Left lung (tissue), 14 donors: ENCODE measurements at regions of chr11 and their contacts with region 1.

Region 1: DNA sequence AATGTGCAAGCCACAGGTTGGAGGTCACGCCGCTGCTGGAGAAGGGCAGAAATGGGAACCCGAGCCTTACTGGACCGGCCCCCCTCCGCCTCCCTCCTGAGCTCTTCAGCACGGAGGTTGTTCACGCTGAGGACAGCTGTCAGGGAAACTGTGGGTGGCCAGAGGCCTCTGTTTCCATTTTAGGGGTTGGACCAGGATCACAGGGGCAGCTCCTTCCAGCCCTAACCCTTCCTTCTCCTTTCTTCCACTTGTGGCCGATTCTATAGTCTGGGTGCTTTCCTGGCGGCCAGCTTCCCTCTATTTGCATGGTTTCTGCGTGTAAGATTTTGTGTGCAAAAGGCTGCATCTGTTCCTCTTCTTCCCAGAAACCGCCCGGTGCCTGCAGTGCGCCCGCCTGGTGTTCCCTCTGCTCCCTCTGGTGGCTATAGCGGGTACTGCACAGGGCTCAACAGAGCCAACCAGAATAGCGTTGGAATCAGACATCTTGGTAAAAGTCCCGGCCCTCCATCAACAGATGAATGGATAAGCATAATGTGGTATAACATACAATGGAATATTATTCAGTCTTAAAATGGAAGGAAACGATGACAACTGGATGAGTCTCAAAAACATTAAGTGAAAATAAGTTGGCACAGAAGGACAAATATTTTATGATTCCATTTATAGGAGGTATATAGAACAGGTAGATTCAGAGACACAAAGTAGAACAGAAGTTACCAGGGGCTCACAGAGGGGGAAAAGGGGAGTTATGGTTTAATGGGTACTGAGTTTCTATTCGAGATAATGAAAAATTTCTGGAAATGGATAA is 8.4 kb upstream of the SLC22A8 start:
- DNase-seq: peak; percentile 71 to 92 (median 85)
- ATAC-seq: peak; percentile 99
- H3K4me3 ChIP-seq: no peak overlapping the region
- H3K27ac ChIP-seq: no peak overlapping the region
- H3K4me1 ChIP-seq: peaks cover 0 to 8% of the 10 kb centered on the region in 2 donors
- H3K27me3 ChIP-seq: peaks cover 0 to 9% of the 10 kb centered on the region in 2 donors
- CTCF ChIP-seq: peak; percentile 96 to 100

Region 2: DNA sequence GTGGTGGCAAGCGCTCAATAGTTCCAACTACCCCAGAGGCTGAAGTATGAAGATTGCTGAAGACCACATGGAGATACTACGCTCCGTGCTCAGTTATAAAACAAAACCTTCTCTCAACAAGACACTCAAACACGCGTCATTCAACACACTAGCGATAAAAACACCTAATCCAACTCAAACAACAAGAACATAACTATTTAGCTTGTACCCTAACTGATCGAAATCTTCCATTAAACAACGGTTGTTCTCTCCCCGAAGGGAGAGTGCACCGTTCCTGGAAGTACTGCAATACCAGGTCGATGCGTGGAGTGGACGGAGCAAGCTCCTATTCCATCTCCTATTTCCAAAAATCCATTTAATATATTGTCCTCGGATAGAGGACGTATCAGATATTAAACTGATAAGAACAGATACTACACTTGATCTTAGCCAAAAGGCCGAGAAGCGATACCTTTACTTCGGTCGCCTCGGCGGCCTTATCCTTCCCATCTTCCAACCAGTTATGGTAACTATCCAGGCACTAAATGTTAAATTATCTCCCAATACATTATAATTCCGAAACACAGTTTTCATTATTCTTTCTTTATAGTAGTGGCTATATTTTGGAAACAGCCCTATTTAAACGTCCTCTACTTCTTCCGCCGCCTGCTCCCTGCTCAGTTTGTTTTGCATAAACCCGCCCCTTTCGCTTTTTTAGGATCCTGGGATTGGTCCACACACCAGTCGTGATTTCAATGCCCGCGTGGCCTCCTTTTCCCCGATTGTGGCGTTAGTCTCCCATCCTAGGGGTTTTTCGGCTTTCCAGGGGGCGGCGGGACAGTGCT is 182.5 kb before region 1 on chr11:
- intact Hi-C with region 1: no loop called
- DNase-seq: peak; percentile 86 to 94 (median 91)
- ATAC-seq: peak; percentile 73
- H3K4me3 ChIP-seq: peak overlapping the region; percentile 68 to 98
- H3K27ac ChIP-seq: peak overlapping the region; percentile 98 to 99
- H3K4me1 ChIP-seq: peaks cover 10 to 33% of the 10 kb centered on the region in 2 donors
- H3K27me3 ChIP-seq: no peaks in the 10 kb centered on the region
- CTCF ChIP-seq: no peak

Region 3: GRCh38 chr11:62905927-62906531 is 118.0 kb before region 1 on chr11:
- intact Hi-C with region 1: loop called (anchors 2 to 10 kb)
- DNase-seq: peak; percentile 78 to 89 (median 83)
- ATAC-seq: peak; percentile 86
- H3K4me3 ChIP-seq: no peak overlapping the region
- H3K27ac ChIP-seq: peak overlapping the region in 1 of 2 donors; percentile 62
- H3K4me1 ChIP-seq: peaks cover 14 to 43% of the 10 kb centered on the region in 2 donors
- H3K27me3 ChIP-seq: no peaks in the 10 kb centered on the region
- CTCF ChIP-seq: peak; percentile 95 to 98

Region 4: GRCh38 chr11:63132985-63133775 is 109.1 kb after region 1 on chr11:
- intact Hi-C with region 1: no loop called
- DNase-seq: no peak
- ATAC-seq: no peak
- H3K4me3 ChIP-seq: no peak overlapping the region
- H3K27ac ChIP-seq: no peak overlapping the region
- H3K4me1 ChIP-seq: no peaks in the 10 kb centered on the region
- H3K27me3 ChIP-seq: peaks cover 0 to 16% of the 10 kb centered on the region in 2 donors
- CTCF ChIP-seq: no peak